ENCODE measurements at regions of chr2 and their contacts with region 1.

Region 1: GRCh38 chr2:176140513-176141317 is 10.6 kb upstream of the HOXD4 start:
- DNase-seq: peak; percentile 87
- ATAC-seq: peak; percentile 92

Region 2: DNA sequence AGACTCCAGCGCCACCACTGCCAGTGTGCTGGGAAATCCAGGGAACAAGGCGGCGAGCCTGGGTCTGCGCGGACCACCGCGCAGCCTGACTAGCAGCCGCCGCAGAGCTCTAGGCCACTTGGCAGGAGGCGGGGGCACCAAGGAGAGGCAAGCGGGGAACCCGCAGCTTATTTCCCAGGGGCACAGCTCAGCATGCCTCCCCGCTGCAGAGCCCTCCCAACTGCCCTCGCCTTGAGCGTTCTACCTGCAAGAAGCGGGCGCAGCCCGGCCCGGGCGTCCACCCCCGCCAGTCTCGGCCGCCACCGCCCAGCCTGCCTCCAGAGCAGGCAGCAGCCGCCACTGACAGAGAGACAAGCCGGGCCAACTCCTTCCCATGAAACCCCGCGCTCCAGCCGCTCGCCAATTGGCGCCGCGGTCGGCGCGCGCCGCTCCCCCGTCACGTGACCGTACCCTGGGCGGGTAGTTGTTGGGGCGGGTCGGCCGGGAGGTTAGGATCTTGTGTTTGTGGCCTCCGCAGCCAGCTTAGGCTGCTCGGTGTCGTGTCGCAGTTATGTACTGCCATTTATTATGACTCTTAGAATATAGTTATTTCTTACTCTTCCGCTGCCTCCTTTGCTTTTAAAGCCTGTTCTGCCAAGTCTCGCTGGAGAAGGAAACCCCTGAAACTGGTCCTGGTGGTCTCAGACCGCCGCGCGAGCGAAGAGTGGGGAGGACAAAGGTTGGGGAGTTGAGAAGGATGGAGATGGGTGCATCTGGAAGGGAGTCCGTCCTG is 138.6 kb before region 1 on chr2 and contains the start of gene LNPK:
- intact Hi-C with region 1: no loop called
- DNase-seq: peak; percentile 96
- ATAC-seq: peak; percentile 99
- total RNA-seq, gene LNPK: 42.1 TPM

Region 3: GRCh38 chr2:176454893-176455811 is 314.4 kb after region 1 on chr2:
- intact Hi-C with region 1: loop called (anchors 5 kb)
- DNase-seq: peak; percentile 92
- ATAC-seq: peak; percentile 72

Region 4: GRCh38 chr2:176554101-176555048 is 413.7 kb after region 1 on chr2:
- intact Hi-C with region 1: loop called (anchors 5 kb)
- DNase-seq: no peak
- ATAC-seq: peak; percentile 74

Measured in sciatic nerve (tissue), 2 donors.